CD4-positive, alpha-beta memory T cell (primary cell): ENCODE measurements at regions of chr13 and their contacts with region 1.

Region 1: GRCh38 chr13:41061075-41061913 is at the start of gene WBP4:
- DNase-seq: peak; percentile 89 to 94 (median 90)
- H3K4me3 ChIP-seq: peak within 1 kb of the TSS; percentile 92 to 99
- H3K4me3 Mint-ChIP-seq: peak within 1 kb of the TSS; percentile 97 to 100 (median 100)
- H3K27ac ChIP-seq: peak within 1 kb of the TSS; percentile 81
- H3K27ac Mint-ChIP-seq: peak within 1 kb of the TSS; percentile 99 to 100 (median 99)
- H3K4me1 ChIP-seq: peaks cover 42% of the 10 kb centered on the region
- H3K4me1 Mint-ChIP-seq: peaks cover 28 to 74% (median 38%) of the 10 kb centered on the region in 4 donors
- H3K27me3 ChIP-seq: no peaks in the 10 kb centered on the region
- H3K27me3 Mint-ChIP-seq: peaks cover 2 to 5% of the 10 kb centered on the region in 2 donors
- total RNA-seq, gene WBP4: 8.4 to 9.1 TPM

Region 2: DNA sequence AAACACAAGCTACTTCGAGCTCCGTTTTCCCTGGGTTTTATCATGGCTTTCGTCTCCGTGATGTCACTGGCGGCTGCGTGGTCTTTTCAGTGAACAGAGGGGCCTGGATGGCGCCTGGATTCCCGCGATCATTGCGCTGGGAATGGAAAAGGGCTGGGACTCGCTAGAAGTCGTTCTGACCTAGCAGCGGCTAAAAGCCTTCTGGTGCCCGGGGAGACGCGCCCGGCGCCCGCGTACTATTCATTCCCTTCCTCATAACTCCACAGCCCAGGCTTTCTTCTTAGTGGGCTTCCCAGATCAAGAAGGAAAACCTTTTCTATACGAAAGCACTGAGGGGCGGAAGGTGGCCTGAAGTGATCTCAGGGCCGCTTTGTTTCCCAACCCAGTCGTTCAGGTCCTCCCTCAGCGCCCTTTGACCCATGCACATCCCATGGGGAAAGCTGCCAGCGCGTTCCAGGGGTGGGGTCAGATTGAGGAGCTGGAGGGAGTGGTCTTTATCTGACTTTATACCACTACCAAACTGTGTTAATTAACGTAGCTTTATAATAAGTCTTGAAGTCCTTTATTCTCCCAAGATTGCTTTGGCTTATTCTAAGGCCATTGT is 138.8 kb before region 1 on chr13:
- CTCF ChIA-PET with region 1: interaction called, 12 read pairs
- POLR2A ChIA-PET with region 1: interaction called, 30 read pairs
- intact Hi-C with region 1: loop called (anchors 1 kb)
- DNase-seq: no peak
- H3K4me3 ChIP-seq: no peak overlapping the region
- H3K4me3 Mint-ChIP-seq: peak overlapping the region; percentile 63 to 83 (median 73)
- H3K27ac ChIP-seq: no peak overlapping the region
- H3K27ac Mint-ChIP-seq: peak overlapping the region in 6 of 7 donors; percentile 70 to 90 (median 80)
- H3K4me1 ChIP-seq: peaks cover 15% of the 10 kb centered on the region
- H3K4me1 Mint-ChIP-seq: peaks cover 12 to 29% (median 21%) of the 10 kb centered on the region in 4 donors
- H3K27me3 ChIP-seq: no peaks in the 10 kb centered on the region
- H3K27me3 Mint-ChIP-seq: no peaks in the 10 kb centered on the region

Region 3: GRCh38 chr13:40982772-40983171 is 78.5 kb before region 1 on chr13:
- CTCF ChIA-PET with region 1: interaction called, 6 read pairs
- POLR2A ChIA-PET with region 1: interaction called, 48 read pairs
- intact Hi-C with region 1: loop called (anchors 1 kb)
- DNase-seq: peak; percentile 78 to 90 (median 84)
- H3K4me3 ChIP-seq: peak overlapping the region; percentile 76 to 90
- H3K4me3 Mint-ChIP-seq: peak overlapping the region; percentile 82 to 98 (median 92)
- H3K27ac ChIP-seq: peak overlapping the region; percentile 82
- H3K27ac Mint-ChIP-seq: peak overlapping the region; percentile 95 to 99 (median 97)
- H3K4me1 ChIP-seq: peaks cover 49% of the 10 kb centered on the region
- H3K4me1 Mint-ChIP-seq: peaks cover 38 to 57% (median 45%) of the 10 kb centered on the region in 4 donors
- H3K27me3 ChIP-seq: no peaks in the 10 kb centered on the region
- H3K27me3 Mint-ChIP-seq: no peaks in the 10 kb centered on the region

Region 4: GRCh38 chr13:41019011-41019487 is 42.2 kb before region 1 on chr13 and contains the start of gene ELF1:
- CTCF ChIA-PET with region 1: interaction called, 29 read pairs
- POLR2A ChIA-PET with region 1: interaction called, 104 read pairs
- intact Hi-C with region 1: loop called (anchors 1 kb)
- DNase-seq: peak; percentile 74 to 89 (median 80)
- H3K4me3 ChIP-seq: peak within 1 kb of the TSS; percentile 65 to 72
- H3K4me3 Mint-ChIP-seq: peak within 1 kb of the TSS; percentile 83 to 98 (median 95)
- H3K27ac ChIP-seq: peak within 1 kb of the TSS; percentile 85
- H3K27ac Mint-ChIP-seq: peak within 1 kb of the TSS; percentile 90 to 99 (median 96)
- H3K4me1 ChIP-seq: peaks cover 34% of the 10 kb centered on the region
- H3K4me1 Mint-ChIP-seq: peaks cover 26 to 39% (median 33%) of the 10 kb centered on the region in 4 donors
- H3K27me3 ChIP-seq: no peaks in the 10 kb centered on the region
- H3K27me3 Mint-ChIP-seq: no peaks in the 10 kb centered on the region
- total RNA-seq, gene ELF1: 188 to 192 TPM

Region 5: GRCh38 chr13:41193919-41194824 is 132.9 kb after region 1 on chr13 and contains the start of gene KBTBD7:
- CTCF ChIA-PET with region 1: interaction called, 3 read pairs
- POLR2A ChIA-PET with region 1: no interaction called
- intact Hi-C with region 1: loop called (anchors 1 kb)
- DNase-seq: peak; percentile 83 to 90 (median 86)
- H3K4me3 ChIP-seq: peak within 1 kb of the TSS; percentile 18 to 94
- H3K4me3 Mint-ChIP-seq: peak within 1 kb of the TSS; percentile 93 to 97 (median 94)
- H3K27ac ChIP-seq: peak within 1 kb of the TSS; percentile 72
- H3K27ac Mint-ChIP-seq: peak within 1 kb of the TSS; percentile 72 to 97 (median 92)
- H3K4me1 ChIP-seq: peaks cover 29% of the 10 kb centered on the region
- H3K4me1 Mint-ChIP-seq: peaks cover 23 to 45% (median 33%) of the 10 kb centered on the region in 4 donors
- H3K27me3 ChIP-seq: no peaks in the 10 kb centered on the region
- H3K27me3 Mint-ChIP-seq: no peaks in the 10 kb centered on the region
- total RNA-seq, gene KBTBD7: 11.1 to 11.8 TPM

Region 6: DNA sequence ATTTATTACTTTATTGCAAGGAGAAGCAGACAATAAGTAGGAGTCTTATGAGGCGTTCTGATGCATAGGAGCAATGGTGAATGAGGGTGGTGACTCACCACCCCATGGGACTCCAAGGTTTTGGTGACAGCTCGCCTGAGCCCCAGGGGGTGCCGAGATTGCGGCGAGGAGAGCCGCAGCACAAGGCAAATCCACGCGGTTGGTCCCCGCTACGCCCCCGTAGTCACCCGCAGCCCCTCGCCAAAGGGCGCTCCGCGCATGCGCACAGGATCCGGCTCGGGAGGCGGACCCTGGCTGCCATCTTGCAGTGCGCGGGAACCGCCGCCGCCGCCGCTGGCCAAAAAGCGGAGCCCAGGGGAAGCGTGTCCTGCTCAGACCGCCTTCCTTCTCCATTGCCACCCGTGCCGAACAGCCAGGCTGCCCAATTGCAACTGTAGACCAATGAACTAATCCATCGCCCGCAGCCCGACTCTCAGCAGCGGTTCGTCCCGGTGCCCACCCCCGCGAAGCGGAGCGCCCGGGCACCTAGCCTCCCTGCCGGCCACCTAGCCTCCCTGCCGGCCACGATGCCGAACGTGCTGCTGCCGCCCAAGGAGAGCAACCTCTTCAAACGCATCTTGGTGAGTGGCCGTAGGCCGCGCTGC is 249.8 kb after region 1 on chr13 and contains the start of gene NAA16:
- CTCF ChIA-PET with region 1: no interaction called
- POLR2A ChIA-PET with region 1: no interaction called
- intact Hi-C with region 1: loop called (anchors 5 kb)
- DNase-seq: peak; percentile 92 to 94 (median 93)
- H3K4me3 ChIP-seq: peak within 1 kb of the TSS; percentile 85 to 94
- H3K4me3 Mint-ChIP-seq: peak within 1 kb of the TSS; percentile 94 to 97 (median 96)
- H3K27ac ChIP-seq: peak within 1 kb of the TSS; percentile 83
- H3K27ac Mint-ChIP-seq: peak within 1 kb of the TSS; percentile 94 to 96 (median 96)
- H3K4me1 ChIP-seq: peaks cover 45% of the 10 kb centered on the region
- H3K4me1 Mint-ChIP-seq: peaks cover 22 to 46% (median 36%) of the 10 kb centered on the region in 4 donors
- H3K27me3 ChIP-seq: no peaks in the 10 kb centered on the region
- H3K27me3 Mint-ChIP-seq: no peaks in the 10 kb centered on the region
- total RNA-seq, gene NAA16: 62.3 to 62.5 TPM

Region 7: DNA sequence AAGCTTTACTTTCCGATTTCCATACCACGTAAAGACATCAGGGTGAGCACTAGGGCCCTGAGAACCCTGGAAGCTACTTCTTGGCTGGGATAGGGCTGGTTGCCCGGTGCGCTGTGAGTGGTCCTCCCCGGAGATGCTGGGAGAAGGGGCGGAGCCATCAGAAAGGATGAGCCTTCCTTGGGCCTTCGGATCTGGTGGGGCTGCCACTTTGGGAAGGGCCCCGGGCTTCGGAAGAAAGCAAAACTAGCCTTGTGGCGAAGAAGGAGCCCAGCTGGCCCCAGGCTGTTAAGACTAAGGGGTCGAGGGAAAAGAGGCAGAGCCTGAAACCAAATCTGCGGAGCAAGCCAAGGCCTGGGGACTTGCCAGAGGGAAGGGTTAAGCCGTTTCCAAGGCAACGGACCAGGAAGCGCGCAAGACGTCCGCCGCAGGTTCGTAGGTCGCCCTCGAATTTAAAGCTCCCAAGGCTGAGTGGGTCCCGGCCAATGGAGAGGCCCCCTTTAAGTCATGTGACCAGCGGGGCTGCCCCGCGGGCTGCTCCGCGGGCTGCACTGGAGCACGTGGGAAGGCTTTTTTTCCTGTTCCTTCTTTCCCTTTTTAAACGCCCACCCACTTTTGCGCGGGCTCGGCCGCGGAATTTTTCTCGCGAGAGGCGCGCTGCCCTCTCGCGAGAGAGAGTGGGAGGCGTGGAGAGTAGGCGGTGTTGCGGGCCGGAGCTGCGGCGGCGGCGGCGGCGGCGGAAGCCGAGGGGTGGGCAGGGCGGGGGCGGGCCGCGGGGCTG is 1210.2 kb after region 1 on chr13:
- CTCF ChIA-PET with region 1: no interaction called
- POLR2A ChIA-PET with region 1: interaction called, 3 read pairs
- intact Hi-C with region 1: loop called (anchors 5 kb)
- DNase-seq: peak; percentile 95 to 98 (median 96)
- H3K4me3 ChIP-seq: peak overlapping the region; percentile 82 to 93
- H3K4me3 Mint-ChIP-seq: peak overlapping the region; percentile 88 to 99 (median 97)
- H3K27ac ChIP-seq: peak overlapping the region; percentile 94
- H3K27ac Mint-ChIP-seq: peak overlapping the region; percentile 98 to 99 (median 98)
- H3K4me1 ChIP-seq: peaks cover 46% of the 10 kb centered on the region
- H3K4me1 Mint-ChIP-seq: peaks cover 35 to 60% (median 47%) of the 10 kb centered on the region in 4 donors
- H3K27me3 ChIP-seq: no peaks in the 10 kb centered on the region
- H3K27me3 Mint-ChIP-seq: no peaks in the 10 kb centered on the region

Region 8: DNA sequence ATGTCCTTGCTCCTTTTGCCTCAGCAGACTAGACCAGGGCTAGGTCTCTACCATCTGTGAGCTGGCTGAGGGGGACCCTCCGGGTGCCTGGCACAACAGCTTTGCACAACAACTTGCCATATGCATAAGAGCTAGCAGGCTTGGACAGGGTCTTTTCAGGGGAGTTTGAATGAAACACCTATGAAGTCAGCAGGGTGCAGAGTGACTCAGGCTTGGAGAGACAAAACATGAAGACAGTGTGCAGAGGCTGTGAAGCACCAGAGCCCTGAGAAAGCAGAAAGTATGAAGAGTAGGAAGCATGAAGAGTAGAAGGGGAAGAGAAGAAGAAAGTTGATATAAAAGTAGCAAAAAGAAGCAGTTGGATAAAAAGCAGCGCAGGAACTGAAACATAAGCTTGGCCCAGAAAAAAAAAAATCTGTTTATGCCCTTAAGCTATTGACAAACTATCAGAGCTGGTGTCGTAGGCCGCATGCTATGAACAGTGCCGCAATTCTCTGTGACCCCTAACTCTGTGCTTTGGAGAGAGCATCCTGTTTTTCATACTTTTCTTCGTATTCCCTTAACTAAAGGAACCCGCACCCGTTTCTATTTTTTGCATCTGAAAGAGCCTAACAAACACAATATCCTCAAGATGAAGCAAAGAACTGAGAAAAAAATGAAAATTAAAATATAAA is 1667.3 kb after region 1 on chr13:
- CTCF ChIA-PET with region 1: no interaction called
- POLR2A ChIA-PET with region 1: no interaction called
- intact Hi-C with region 1: no loop called
- DNase-seq: no peak
- H3K4me3 ChIP-seq: no peak overlapping the region
- H3K4me3 Mint-ChIP-seq: no peak overlapping the region
- H3K27ac ChIP-seq: no peak overlapping the region
- H3K27ac Mint-ChIP-seq: no peak overlapping the region
- H3K4me1 ChIP-seq: no peaks in the 10 kb centered on the region
- H3K4me1 Mint-ChIP-seq: no peaks in the 10 kb centered on the region
- H3K27me3 ChIP-seq: no peaks in the 10 kb centered on the region
- H3K27me3 Mint-ChIP-seq: peaks cover 1 to 2% of the 10 kb centered on the region in 2 donors